Aorta (tissue), 5 donors: ENCODE measurements at regions of chr4 and their contacts with region 1.

Region 1: GRCh38 chr4:74531963-74532794 is 87.2 kb downstream of the AREG start:
- DNase-seq: no peak
- ATAC-seq: no peak
- H3K4me3 ChIP-seq: no peak overlapping the region
- H3K27ac ChIP-seq: no peak overlapping the region
- H3K4me1 ChIP-seq: peaks cover 0 to 2% of the 10 kb centered on the region in 2 donors
- H3K27me3 ChIP-seq: no peaks in the 10 kb centered on the region

Region 2: GRCh38 chr4:74376888-74377483 is 155.2 kb before region 1 on chr4:
- intact Hi-C with region 1: loop called (anchors 2 kb)
- DNase-seq: no peak
- ATAC-seq: peak; percentile 80
- H3K4me3 ChIP-seq: no peak overlapping the region
- H3K27ac ChIP-seq: no peak overlapping the region
- H3K4me1 ChIP-seq: no peaks in the 10 kb centered on the region
- H3K27me3 ChIP-seq: no peaks in the 10 kb centered on the region